Activated T-helper 2 cell treated with anti-CD3 and anti-CD28 coated beads, Interferon-gamma antibody, Interleukin-2, Interleukin-4, amounts not matched to agents 10 μg/mL and 5 μg/mL and 100 μg/mL, durations not matched to agents 14 hours and 24 hours and 36 hours (primary cell): ENCODE measurements at regions of chr20 and their contacts with region 1.

Region 1: DNA sequence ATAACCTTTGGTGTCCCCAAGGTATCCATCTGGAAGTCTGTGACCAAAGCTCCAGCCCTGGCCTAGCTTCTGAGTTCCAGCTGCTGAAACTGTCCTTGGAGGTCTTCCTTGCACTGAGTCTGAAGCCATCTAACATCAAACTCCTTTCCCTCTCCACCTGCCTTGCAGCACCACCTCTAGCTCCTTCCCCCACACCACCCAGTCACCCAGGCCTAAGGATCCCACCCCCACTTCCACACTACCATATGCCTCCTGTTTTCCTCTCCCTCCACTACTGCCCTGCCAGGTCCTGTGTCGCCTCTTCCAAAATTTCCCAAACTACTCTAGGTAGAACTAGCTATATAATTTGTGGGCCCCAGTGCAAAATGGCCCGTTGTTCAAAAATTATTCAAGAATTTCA is 10.8 kb upstream of the MATN4 start:
- DNase-seq: no peak
- H3K4me3 Mint-ChIP-seq: no peak overlapping the region
- H3K27ac Mint-ChIP-seq: peak overlapping the region; percentile 64
- H3K4me1 Mint-ChIP-seq: peaks cover 32% of the 10 kb centered on the region
- H3K27me3 Mint-ChIP-seq: peaks cover 22% of the 10 kb centered on the region

Region 2: DNA sequence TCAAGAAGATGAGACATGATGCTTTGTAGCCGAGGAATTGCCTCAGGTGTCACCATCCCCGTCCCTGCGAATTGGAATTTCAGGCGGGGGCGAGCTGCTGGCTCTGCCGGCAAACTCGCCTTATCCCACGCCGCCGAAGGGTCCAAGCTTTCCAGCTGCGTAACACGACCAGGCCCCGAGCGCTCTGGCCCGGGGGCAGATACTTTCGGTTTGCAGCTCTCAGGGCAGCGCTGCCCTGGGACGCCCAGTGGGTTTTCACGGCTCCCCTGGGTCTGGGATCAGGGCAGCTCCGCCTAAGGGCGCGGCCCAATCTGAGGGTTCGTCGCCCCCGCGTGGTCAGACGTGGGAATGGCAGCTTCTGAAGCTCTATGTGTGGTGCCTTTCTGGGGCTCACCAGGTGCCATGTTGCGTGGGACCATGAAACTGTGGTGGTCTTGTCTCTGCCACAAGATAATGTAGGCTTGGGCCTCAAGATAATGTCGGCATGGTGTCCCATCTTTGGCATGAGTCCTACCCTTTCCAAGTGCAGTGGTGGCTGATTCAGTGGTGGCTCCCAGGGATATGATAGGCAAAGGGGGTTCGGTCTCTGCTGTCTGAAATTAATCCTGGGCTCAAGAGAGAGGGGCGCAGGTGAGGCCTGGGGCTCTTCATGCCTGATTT is 117.9 kb after region 1 on chr20:
- intact Hi-C with region 1: loop called (anchors 2 kb)
- DNase-seq: peak; percentile 74
- H3K4me3 Mint-ChIP-seq: peak overlapping the region; percentile 70
- H3K27ac Mint-ChIP-seq: no peak overlapping the region
- H3K4me1 Mint-ChIP-seq: peaks cover 11% of the 10 kb centered on the region
- H3K27me3 Mint-ChIP-seq: no peaks in the 10 kb centered on the region

Region 3: GRCh38 chr20:45450097-45450818 is 131.3 kb after region 1 on chr20:
- intact Hi-C with region 1: loop called (anchors 5 kb)
- DNase-seq: no peak
- H3K4me3 Mint-ChIP-seq: no peak overlapping the region
- H3K27ac Mint-ChIP-seq: no peak overlapping the region
- H3K4me1 Mint-ChIP-seq: peaks cover 6% of the 10 kb centered on the region
- H3K27me3 Mint-ChIP-seq: no peaks in the 10 kb centered on the region